ENCODE measurements at regions of chr1 and their contacts with region 1.

Region 1: GRCh38 chr1:228902781-228903433 is 167.6 kb downstream of the RHOU start:
- DNase-seq: peak; percentile 98
- H3K4me3 ChIP-seq: peak overlapping the region in 2 of 4 donors; percentile 3 to 8
- H3K27ac ChIP-seq: peak overlapping the region; percentile 62 to 80 (median 70)
- H3K4me1 ChIP-seq: peaks cover 9 to 51% (median 47%) of the 10 kb centered on the region in 4 donors
- H3K27me3 ChIP-seq: no peaks in the 10 kb centered on the region
- CTCF ChIP-seq: no peak
- EP300 ChIP-seq: no peak
- POLR2A ChIP-seq: no peak

Region 2: DNA sequence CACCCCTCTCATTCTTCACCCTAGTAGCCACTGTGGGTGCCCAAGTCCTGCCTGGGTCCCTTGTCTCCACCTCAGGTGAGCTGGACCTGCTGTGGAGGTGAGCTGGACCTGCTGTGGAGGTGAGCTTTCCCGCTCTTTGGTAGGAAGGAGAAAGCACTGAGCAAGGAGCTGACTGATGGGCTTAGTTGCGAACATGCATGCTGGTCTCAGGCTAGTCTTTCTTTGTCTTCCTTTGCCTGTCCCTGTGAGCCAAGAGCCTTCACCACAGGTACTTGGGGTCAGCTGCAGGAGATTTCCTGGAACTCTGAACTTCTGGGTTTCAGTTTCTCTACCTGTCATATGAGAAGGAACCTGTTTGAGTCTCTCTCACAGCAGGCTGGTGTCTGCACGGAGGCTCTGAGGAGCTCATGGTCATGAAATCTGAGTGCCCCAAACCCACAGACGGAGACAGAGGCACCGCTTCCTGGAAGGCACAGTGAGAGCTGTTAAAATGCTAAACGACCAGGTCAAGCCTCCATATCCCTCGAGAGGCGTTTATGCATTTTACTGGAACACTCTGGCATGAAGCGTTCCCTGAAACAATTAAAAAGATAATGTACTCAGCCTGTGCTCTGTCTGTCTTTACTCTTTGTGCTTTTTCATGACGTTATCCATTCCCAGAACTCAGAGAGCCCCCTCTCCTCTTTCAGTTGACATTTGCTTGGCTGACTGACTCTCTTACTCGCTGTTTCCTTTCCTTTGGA is 98.1 kb before region 1 on chr1:
- intact Hi-C with region 1: loop called (anchors 5 kb)
- DNase-seq: peak; percentile 72
- H3K4me3 ChIP-seq: no peak overlapping the region
- H3K27ac ChIP-seq: peak overlapping the region in 1 of 4 donors; percentile 33
- H3K4me1 ChIP-seq: peaks cover 0 to 50% (median 48%) of the 10 kb centered on the region in 4 donors
- H3K27me3 ChIP-seq: no peaks in the 10 kb centered on the region
- CTCF ChIP-seq: no peak
- EP300 ChIP-seq: no peak
- POLR2A ChIP-seq: no peak

Region 3: DNA sequence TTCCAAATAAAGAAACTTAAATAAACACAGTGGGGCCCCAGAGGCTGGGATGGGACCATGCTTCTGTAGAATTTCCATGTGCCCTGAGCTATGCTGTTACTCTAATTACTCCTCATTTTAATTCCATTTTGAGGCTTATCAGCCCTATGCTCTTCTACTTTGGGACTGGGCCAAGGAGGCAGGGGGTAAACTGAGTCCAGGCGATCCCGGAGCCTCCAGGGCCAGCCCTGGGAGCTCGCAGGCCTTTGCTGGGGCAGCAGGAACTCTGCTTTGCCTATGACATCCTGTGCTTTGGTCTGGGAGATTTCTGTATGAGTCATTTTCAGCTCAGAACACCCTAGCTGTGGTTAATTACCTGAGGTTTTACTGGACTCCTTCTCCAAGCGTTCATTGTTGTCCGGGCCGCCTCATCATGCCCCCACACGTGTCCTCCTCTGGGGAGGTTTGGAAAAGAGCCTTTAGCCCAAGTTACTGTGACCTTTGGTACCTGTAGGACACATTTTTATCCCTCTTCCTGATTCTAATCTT is 71.9 kb before region 1 on chr1:
- intact Hi-C with region 1: no loop called
- DNase-seq: no peak
- H3K4me3 ChIP-seq: no peak overlapping the region
- H3K27ac ChIP-seq: no peak overlapping the region
- H3K4me1 ChIP-seq: peaks cover 6 to 27% (median 13%) of the 10 kb centered on the region in 4 donors
- H3K27me3 ChIP-seq: no peaks in the 10 kb centered on the region
- CTCF ChIP-seq: no peak
- EP300 ChIP-seq: no peak
- POLR2A ChIP-seq: no peak

Region 4: DNA sequence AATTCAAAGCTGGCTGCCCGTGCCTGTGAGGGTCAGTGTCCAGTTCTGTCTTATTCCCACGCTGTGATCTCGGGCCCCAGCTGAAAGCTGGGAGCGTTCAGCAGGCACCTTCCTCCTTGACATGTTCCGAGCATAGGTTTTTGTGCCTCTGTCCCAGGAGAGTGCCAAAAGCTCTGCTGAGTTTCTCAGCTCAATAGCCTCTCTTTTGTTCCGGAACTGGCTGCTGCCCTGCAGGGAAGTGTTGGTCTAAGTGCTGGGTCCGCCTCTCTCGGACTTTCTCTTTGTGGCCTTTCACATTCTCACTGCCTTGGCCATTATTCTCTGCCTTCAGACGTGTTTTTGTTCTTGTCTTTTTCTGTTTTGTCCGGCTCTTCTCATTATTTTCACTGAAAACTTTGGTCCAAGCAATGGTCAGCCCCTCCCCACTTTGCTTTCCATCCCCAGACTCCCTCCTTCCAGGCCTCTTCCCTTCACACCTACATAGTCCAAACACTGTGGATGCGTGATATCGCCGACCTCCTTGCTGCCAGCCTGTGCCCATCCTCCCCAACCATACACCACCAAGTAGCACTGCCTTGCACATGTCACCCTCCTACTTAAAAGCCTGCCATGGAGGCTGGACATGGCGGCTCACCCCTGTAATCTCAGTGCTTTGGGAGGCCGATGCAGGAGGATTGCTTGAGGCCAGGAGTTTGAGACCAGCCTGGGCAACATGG is 66.1 kb after region 1 on chr1:
- intact Hi-C with region 1: no loop called
- DNase-seq: no peak
- H3K4me3 ChIP-seq: no peak overlapping the region
- H3K27ac ChIP-seq: no peak overlapping the region
- H3K4me1 ChIP-seq: peaks cover 6 to 8% (median 8%) of the 10 kb centered on the region in 4 donors
- H3K27me3 ChIP-seq: no peaks in the 10 kb centered on the region
- CTCF ChIP-seq: no peak
- EP300 ChIP-seq: no peak
- POLR2A ChIP-seq: no peak

Measured in esophagus muscularis mucosa (tissue), 4 donors.